ENCODE measurements at regions of chr14 and their contacts with region 1.

Region 1: DNA sequence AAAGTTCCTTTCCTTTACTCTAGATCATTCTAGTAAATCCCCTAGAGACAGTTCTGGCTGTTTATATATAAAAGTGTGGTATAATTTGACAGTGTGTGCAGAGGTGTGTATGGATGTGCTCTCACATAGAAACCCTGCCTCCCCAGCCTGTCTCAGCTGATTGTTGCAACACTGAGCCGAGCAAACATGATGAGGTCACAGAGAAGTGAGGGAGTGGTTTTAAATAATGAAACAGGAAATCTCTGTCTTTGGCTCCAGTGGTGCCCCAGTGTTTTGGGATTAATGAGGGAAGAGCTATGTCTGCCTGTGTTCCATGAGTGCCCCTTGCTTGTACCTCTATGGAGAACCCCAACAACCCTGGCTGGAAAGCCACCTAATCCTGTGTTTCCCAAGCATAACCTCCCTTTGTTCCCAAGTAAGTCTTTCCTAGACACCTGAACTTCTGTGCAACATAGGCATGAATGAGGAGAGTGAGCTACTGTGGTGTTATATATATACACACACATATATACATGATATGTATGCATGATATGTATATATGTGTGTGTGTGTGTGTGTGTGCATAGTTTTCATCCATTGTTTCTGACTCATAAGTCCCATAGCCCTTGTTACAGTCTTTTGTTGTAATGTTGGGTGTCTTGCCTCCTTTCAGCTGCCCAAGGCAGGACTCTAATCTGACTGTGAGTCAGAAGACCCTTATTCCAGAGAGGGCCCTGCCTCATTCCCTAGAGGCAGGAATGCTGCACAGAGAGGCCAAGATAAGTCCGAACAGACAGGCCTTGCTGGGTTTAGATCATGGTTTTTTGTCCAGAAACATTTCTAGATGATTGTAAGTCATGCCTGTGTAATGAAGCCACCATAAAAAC is 18.0 kb downstream of the TRAF3 start:
- DNase-seq: no peak
- ATAC-seq: peak; percentile 72
- H3K4me3 Mint-ChIP-seq: peak overlapping the region; percentile 47
- H3K27ac Mint-ChIP-seq: peak overlapping the region; percentile 79
- H3K4me1 Mint-ChIP-seq: peaks cover 85% of the 10 kb centered on the region
- H3K27me3 Mint-ChIP-seq: no peaks in the 10 kb centered on the region
- CTCF ChIP-seq: no peak

Region 2: DNA sequence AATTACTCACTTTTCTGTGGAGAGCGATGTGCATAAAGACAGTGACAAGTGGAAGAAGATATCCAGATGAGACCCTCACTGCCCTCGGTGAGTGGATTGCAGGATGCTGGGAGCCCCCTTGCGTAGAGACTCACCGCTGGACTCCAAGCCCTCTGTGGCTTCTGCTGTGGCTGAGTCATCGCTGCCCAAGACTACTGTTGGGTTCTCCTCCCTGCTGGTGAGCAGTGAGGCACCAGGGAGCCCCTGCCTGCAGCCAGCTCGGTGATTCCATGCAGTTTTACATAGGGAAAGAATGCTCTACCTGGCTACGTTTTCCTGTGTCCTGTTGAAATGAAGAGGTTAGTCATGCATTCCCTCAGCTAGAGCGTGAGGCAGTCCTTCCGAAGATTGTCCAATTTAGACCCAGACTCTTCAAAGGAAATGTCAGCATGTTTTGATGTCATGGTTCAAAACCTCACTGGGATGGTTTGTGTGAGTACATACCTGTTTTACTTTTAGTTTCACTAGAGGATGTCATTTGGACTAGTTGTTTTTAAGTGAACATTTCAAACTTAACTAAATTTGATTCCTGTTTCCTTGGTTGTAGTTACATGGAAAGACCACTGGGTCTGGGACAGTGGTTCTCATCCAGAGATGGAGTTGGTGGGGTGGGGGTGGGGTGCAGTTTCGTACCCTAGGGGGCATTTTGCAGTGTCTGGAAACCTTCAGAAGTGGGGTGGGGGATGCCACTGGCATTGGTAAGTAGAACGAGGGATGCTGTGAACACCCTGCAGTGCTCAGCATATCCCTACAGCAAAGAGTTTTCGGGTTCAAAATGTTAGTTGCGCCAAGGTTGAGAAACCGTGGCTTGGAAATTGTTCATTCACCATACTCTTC is 10.3 kb after region 1 on chr14:
- CTCF ChIA-PET with region 1: no interaction called
- POLR2A ChIA-PET with region 1: interaction called, 5 read pairs
- intact Hi-C with region 1: loop called (anchors 1 kb)
- DNase-seq: peak; percentile 30
- ATAC-seq: peak; percentile 51
- H3K4me3 Mint-ChIP-seq: peak overlapping the region; percentile 74
- H3K27ac Mint-ChIP-seq: peak overlapping the region; percentile 83
- H3K4me1 Mint-ChIP-seq: peaks cover 79% of the 10 kb centered on the region
- H3K27me3 Mint-ChIP-seq: no peaks in the 10 kb centered on the region
- CTCF ChIP-seq: no peak

Region 3: DNA sequence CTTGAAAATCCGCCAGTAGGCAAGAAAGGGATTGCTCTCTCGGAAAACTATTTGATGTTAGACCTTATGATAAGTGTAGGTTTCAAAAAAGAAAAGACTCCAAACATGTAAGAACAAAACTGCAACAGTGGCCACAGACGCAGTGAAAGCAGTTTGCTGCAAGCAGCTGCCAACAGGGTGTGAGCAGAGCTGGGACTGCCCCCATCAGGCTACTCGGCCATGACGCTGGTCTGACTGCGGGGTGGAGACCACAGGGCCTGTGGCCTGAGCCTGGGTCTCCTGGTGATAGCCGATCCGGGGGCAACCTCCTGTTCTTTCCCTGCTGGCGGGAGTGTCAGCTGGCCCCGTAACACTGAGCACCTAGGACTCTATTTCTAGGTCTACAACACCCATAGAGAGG is 190.4 kb after region 1 on chr14:
- CTCF ChIA-PET with region 1: no interaction called
- POLR2A ChIA-PET with region 1: no interaction called
- intact Hi-C with region 1: no loop called
- DNase-seq: no peak
- ATAC-seq: no peak
- H3K4me3 Mint-ChIP-seq: no peak overlapping the region
- H3K27ac Mint-ChIP-seq: no peak overlapping the region
- H3K4me1 Mint-ChIP-seq: peaks cover 4% of the 10 kb centered on the region
- H3K27me3 Mint-ChIP-seq: no peaks in the 10 kb centered on the region
- CTCF ChIP-seq: no peak

Measured in activated B cell treated with CpG ODN at 0.5 μM for 24 hours (primary cell).